ENCODE measurements at regions of chr1 and their contacts with region 1.

Region 1: GRCh38 chr1:211951856-211952255 is 83.5 kb downstream of the INTS7 start:
- DNase-seq: peak; percentile 95
- H3K4me3 ChIP-seq: no peak overlapping the region
- H3K27ac ChIP-seq: peak overlapping the region; percentile 70
- H3K4me1 ChIP-seq: peaks cover 18% of the 10 kb centered on the region
- H3K27me3 ChIP-seq: no peaks in the 10 kb centered on the region
- CTCF ChIP-seq: no peak

Region 2: DNA sequence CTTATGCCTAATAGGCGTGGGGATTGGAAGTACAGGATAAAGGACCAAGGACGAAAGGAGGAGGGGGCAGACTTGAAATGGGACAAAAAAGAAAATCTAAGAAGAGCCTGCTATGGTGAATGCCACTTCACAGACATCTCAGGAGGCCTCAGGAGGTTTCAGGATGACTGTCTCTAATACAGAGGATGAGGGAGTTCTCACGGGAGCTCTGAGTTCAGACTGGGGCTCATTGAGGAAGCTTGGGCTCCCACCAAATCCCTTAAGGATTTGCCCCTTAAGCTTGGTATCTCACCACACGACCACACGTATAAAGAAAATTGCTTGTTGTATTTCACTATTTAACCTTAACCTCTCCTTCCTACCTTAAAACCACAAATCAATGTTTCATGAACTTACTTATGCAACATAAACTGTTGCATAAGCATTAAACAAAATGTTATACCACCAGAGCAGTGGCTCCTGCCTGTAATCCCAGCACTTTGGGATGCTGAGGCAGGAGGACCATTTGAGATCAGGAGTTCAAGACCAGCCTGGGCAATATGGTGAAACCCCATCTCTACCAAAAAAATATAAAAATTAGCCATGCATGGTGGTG is 385.3 kb before region 1 on chr1:
- CTCF ChIA-PET with region 1: no interaction called
- dilution Hi-C with region 1: no loop called
- in situ Hi-C with region 1: no loop called
- intact Hi-C with region 1: no loop called
- DNase-seq: no peak
- H3K4me3 ChIP-seq: no peak overlapping the region
- H3K27ac ChIP-seq: no peak overlapping the region
- H3K4me1 ChIP-seq: no peaks in the 10 kb centered on the region
- H3K27me3 ChIP-seq: no peaks in the 10 kb centered on the region
- CTCF ChIP-seq: no peak

Region 3: DNA sequence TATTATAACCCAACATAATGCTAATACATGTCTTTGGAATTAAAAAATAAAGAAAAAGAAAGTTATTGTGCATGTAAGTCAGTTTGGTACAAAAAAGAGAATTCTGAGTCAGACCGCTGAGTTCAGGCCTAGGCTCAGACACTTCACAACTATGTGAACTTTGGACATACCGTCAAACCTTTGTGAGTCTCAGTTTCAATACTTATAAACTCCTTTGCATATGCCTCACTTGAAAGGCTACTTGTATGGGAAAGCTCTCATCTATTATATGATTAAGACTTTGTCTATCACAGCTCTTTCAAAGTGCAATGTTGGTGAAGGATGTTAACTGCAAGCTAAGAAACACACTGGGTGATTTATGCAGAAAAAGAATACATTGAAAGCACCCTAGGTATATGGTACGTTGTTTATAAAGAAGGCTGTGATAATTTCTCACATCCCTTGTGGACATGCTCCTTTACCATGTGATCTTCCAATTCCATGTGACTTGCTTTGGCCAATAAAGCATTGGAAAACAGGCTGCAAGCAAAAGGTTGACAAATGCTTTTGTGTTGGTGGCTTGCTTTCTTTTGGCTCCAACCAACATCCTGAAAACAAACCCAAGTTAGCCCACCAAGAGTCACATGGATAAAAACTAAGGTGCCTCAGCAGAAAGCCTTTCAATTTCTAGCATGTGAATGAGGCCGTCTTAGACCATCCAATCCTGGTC is 33.9 kb after region 1 on chr1:
- CTCF ChIA-PET with region 1: no interaction called
- dilution Hi-C with region 1: no loop called
- in situ Hi-C with region 1: no loop called
- intact Hi-C with region 1: loop called (anchors 1 kb)
- DNase-seq: no peak
- H3K4me3 ChIP-seq: no peak overlapping the region
- H3K27ac ChIP-seq: no peak overlapping the region
- H3K4me1 ChIP-seq: no peaks in the 10 kb centered on the region
- H3K27me3 ChIP-seq: no peaks in the 10 kb centered on the region
- CTCF ChIP-seq: no peak

Region 4: DNA sequence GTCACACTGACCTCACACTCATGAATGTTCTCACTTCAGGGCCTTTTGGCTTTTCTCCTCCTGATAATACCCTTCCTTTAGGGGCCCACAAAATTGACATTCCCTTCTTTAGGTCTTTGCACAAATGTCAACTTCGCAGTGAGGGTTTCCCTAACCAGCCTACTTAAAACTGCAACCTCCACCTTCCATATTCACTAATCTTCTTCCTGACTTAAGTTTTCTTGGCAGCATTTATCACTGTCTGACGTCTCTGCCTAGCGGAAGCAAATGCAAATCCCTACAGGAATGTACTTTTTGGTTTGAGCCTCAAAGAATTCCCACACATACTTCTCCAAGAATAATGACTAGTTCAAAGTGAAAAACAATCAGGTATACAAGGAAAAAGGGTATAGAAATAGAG is 50.7 kb after region 1 on chr1:
- CTCF ChIA-PET with region 1: no interaction called
- dilution Hi-C with region 1: no loop called
- in situ Hi-C with region 1: no loop called
- intact Hi-C with region 1: no loop called
- DNase-seq: no peak
- H3K4me3 ChIP-seq: no peak overlapping the region
- H3K27ac ChIP-seq: no peak overlapping the region
- H3K4me1 ChIP-seq: no peaks in the 10 kb centered on the region
- H3K27me3 ChIP-seq: no peaks in the 10 kb centered on the region
- CTCF ChIP-seq: no peak